ENCODE measurements at regions of chr2 and their contacts with region 1.

Region 1: DNA sequence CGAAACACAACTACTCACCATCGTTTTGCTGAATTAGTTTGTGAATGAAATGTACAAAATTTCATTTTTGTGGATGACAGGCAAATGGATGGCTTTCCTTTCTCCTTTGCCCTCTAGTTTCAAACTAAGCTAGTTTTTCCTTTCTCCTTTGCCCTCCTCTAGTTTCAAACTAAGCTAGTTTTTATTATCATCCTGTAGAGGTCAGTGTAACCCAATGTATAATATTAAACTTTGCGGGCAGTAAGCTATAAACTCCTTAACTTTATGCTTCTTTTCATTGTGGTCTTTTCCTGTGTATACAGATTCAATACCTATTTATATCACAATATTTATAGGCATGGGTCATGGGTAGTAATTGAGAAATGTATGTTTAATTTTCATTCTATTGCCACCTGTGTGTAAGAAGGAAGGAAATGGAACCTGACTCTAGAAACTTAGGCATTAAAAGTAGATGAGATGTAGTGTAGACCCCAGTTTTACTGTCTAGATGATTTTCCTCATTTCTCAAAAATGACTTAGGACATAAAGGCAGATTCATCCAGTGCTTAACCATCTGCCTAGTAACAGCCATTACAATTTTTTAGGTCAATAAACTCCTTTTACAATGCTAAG is 58.1 kb downstream of the MAP3K19 start:
- DNase-seq: peak; percentile 34
- H3K4me3 ChIP-seq: no peak overlapping the region
- H3K27ac ChIP-seq: no peak overlapping the region
- H3K4me1 ChIP-seq: no peaks in the 10 kb centered on the region
- H3K27me3 ChIP-seq: peaks cover 10 to 31% of the 10 kb centered on the region in 2 experiments
- CTCF ChIP-seq: peak; percentile 15 to 33
- POLR2A ChIP-seq: no peak

Region 2: GRCh38 chr2:134739879-134740301 is 249.2 kb before region 1 on chr2:
- CTCF ChIA-PET with region 1: no interaction called
- POLR2A ChIA-PET with region 1: no interaction called
- dilution Hi-C with region 1: no loop called
- intact Hi-C with region 1: no loop called
- DNase-seq: no peak
- H3K4me3 ChIP-seq: no peak overlapping the region
- H3K27ac ChIP-seq: no peak overlapping the region
- H3K4me1 ChIP-seq: peaks cover 29% of the 10 kb centered on the region
- H3K27me3 ChIP-seq: peaks cover 0 to 8% of the 10 kb centered on the region in 2 experiments
- CTCF ChIP-seq: no peak
- POLR2A ChIP-seq: no peak

Region 3: GRCh38 chr2:135010200-135010942 is 21.3 kb after region 1 on chr2:
- CTCF ChIA-PET with region 1: interaction called, 54 read pairs
- POLR2A ChIA-PET with region 1: no interaction called
- dilution Hi-C with region 1: no loop called
- intact Hi-C with region 1: no loop called
- DNase-seq: no peak
- H3K4me3 ChIP-seq: no peak overlapping the region
- H3K27ac ChIP-seq: no peak overlapping the region
- H3K4me1 ChIP-seq: no peaks in the 10 kb centered on the region
- H3K27me3 ChIP-seq: peaks cover 10% of the 10 kb centered on the region in 2 experiments
- CTCF ChIP-seq: no peak
- POLR2A ChIP-seq: no peak

Region 4: GRCh38 chr2:135074209-135074608 is 85.1 kb after region 1 on chr2:
- CTCF ChIA-PET with region 1: no interaction called
- POLR2A ChIA-PET with region 1: no interaction called
- dilution Hi-C with region 1: no loop called
- intact Hi-C with region 1: no loop called
- DNase-seq: no peak
- H3K4me3 ChIP-seq: no peak overlapping the region
- H3K27ac ChIP-seq: no peak overlapping the region
- H3K4me1 ChIP-seq: no peaks in the 10 kb centered on the region
- H3K27me3 ChIP-seq: no peaks in the 10 kb centered on the region
- CTCF ChIP-seq: no peak
- POLR2A ChIP-seq: no peak

Region 5: DNA sequence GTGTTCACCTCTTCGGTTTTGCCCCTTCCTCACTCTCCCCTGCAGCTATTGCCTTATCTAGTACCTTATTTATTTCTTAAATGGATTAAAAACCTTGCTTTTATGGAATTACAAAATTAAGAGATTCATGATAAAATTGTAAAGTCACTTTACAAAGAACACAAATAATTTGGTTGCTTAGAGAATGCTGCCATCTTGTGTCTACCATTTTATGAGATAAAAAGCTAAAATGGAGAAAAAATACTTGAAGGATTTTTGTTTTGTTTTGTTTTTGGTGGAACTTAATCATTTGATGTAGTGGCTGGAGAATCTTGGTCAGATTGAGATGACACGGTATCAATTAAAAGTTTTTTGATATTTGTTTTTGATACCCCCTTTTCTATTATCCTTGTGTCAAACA is 611.8 kb after region 1 on chr2:
- CTCF ChIA-PET with region 1: interaction called, 19 read pairs
- POLR2A ChIA-PET with region 1: no interaction called
- dilution Hi-C with region 1: no loop called
- intact Hi-C with region 1: no loop called
- DNase-seq: peak; percentile 9
- H3K4me3 ChIP-seq: no peak overlapping the region
- H3K27ac ChIP-seq: no peak overlapping the region
- H3K4me1 ChIP-seq: no peaks in the 10 kb centered on the region
- H3K27me3 ChIP-seq: no peaks in the 10 kb centered on the region
- CTCF ChIP-seq: no peak
- POLR2A ChIP-seq: no peak

Region 6: DNA sequence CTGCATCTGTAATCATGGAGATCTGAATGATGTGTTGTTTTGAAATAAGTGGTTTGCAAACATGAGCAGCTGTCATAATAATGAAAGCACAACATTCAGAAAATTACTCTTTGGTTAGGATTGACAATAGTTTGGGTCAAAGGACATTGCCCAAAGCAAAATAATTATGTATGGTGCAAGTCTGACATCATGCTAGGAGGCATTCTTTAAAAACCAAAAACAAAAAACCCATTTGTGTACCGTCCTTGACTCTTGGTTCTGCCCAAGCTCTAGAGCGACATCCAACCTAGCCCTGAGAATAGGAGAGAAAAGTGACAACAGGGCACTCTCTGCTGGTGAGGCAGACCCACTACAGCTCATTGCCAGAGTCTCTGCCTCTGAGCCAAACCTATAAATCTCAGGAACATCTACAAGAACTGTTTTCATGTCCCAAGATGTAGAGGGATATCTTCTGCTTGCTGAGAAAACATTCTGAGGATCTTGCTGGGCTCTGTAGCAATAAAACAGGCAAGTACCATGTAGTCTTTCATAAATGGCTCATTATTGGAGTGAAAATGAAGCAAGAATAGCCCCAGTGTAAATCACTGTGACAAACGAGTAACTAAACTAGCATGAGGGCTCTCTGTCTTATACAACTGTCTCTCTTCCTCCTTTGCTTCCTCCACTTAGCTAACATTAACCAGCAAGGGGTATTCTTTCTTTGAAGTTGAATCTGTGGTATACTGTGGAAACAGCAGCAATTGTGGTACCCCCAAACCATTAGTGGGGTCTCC is 1395.6 kb after region 1 on chr2:
- CTCF ChIA-PET with region 1: interaction called, 24 read pairs
- POLR2A ChIA-PET with region 1: no interaction called
- dilution Hi-C with region 1: no loop called
- intact Hi-C with region 1: no loop called
- DNase-seq: peak; percentile 44
- H3K4me3 ChIP-seq: no peak overlapping the region
- H3K27ac ChIP-seq: no peak overlapping the region
- H3K4me1 ChIP-seq: no peaks in the 10 kb centered on the region
- H3K27me3 ChIP-seq: peaks cover 0 to 6% of the 10 kb centered on the region in 2 experiments
- CTCF ChIP-seq: peak; percentile 62 to 70
- POLR2A ChIP-seq: no peak

Measured in endothelial cell of umbilical vein (primary cell).